K562 (cell line): ENCODE measurements at regions of chr17 and their contacts with region 1.

Region 1: DNA sequence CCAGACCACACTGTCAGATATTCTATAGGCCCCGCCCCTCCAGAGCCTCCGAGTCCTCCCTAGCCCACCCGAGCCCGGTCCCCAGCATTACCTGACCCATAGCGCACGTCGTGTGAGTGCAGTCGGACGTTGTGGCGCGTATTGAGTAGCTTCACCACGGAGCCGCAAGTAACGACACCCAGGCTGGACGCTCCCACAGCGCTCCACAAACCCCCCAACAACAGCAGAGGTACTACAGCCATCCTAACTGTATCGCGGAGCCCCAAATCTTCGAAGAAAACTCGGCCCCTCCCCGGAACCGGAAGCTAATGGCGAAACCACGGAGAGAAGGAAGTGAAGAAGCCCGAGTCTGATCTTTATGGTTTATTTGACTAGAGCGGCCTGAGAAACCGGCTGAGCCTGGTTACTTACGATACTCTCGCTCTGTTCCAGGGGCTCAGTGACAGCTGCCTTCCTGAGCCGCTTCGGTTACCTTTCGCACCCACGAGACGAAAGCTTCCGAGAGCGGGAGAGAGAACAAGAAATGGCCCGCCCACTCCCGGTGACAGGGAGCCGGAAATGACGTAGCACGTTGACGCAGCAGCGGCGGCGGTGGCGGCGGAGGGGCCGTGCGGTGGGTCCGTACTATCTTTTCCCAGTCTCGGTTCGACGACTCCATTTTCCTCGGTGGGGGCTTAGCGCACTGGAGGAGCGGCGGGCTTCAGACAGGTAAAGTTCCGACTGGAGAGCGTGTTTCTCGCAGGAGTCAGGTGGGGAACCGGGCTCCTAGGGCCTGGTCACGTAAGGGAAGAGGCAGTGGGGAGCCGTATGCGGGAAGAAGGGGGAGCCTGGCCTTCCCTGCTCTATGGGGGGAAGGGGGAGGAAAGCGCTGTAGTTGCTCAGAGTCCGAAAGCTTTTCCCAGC is at the starts of genes SDF2 and SUPT6H:
- DNase-seq: peak; percentile 92 to 97 (median 94)
- ATAC-seq: peak; percentile 89
- H3K4me3 ChIP-seq: peak within 1 kb of the TSS; percentile 61
- H3K27ac ChIP-seq: peak within 1 kb of the TSS; percentile 98
- H3K4me1 ChIP-seq: peaks cover 6 to 10% of the 10 kb centered on the region in 2 experiments; a peak in 3 of 5 replicates
- H3K27me3 ChIP-seq: no peaks in the 10 kb centered on the region
- CTCF ChIP-seq: peak; percentile 19 to 45 (median 34); a peak in 4 of 6 replicates
- EP300 ChIP-seq: no peak
- POLR2A ChIP-seq: peak; percentile 97
- RAD21 ChIP-seq: no peak
- polyA plus RNA-seq, gene SDF2: 116 to 132 TPM
- polyA plus RNA-seq, gene SUPT6H: 1.7 to 3.3 TPM

Region 2: GRCh38 chr17:28675980-28676379 is 14.1 kb after region 1 on chr17:
- CTCF ChIA-PET with region 1: no interaction called
- POLR2A ChIA-PET with region 1: interaction called, 56 read pairs
- in situ Hi-C with region 1: no loop called
- intact Hi-C with region 1: no loop called
- DNase-seq: peak in 1 of 4 experiments; percentile 25
- ATAC-seq: peak; percentile 75
- H3K4me3 ChIP-seq: no peak overlapping the region
- H3K27ac ChIP-seq: no peak overlapping the region
- H3K4me1 ChIP-seq: no peaks in the 10 kb centered on the region
- H3K27me3 ChIP-seq: no peaks in the 10 kb centered on the region
- CTCF ChIP-seq: peak; percentile 57 to 69 (median 60)
- EP300 ChIP-seq: no peak
- POLR2A ChIP-seq: no peak
- RAD21 ChIP-seq: peak in 1 of 2 experiments; percentile 46; a peak in 2 of 4 replicates

Region 3: DNA sequence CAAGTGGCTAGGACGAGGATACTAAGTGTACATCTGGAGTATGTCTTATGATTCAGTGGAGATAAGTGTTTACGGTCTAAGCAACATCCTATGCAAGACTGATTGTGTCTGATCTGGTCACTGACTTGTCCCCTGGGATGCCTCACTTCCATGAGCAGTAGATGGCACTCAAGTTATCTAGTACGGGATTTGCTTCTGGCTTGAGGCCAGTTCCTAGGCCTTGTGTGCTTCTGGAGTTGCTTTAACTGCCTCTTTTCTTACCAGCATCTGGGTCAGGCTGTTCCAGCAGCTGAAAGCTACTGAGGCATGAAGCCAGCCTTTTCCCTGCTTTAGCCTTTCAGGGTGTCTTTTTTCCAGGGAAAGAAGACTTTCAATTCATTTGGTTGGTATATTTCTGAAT is 23.1 kb after region 1 on chr17:
- CTCF ChIA-PET with region 1: no interaction called
- POLR2A ChIA-PET with region 1: interaction called, 56 read pairs
- in situ Hi-C with region 1: no loop called
- intact Hi-C with region 1: no loop called
- DNase-seq: peak in 2 of 4 experiments; percentile 44 to 61
- ATAC-seq: peak; percentile 54; the same call in 2 of the 3 replicates
- H3K4me3 ChIP-seq: no peak overlapping the region
- H3K27ac ChIP-seq: no peak overlapping the region
- H3K4me1 ChIP-seq: no peaks in the 10 kb centered on the region
- H3K27me3 ChIP-seq: no peaks in the 10 kb centered on the region
- CTCF ChIP-seq: peak; percentile 15 to 56 (median 35); a peak in 3 of 6 replicates
- EP300 ChIP-seq: no peak
- POLR2A ChIP-seq: no peak
- RAD21 ChIP-seq: peak in 1 of 2 experiments; percentile 58; a peak in 2 of 4 replicates